AG04449 (cell line): ENCODE measurements at regions of chr20 and their contacts with region 1.

Region 1: DNA sequence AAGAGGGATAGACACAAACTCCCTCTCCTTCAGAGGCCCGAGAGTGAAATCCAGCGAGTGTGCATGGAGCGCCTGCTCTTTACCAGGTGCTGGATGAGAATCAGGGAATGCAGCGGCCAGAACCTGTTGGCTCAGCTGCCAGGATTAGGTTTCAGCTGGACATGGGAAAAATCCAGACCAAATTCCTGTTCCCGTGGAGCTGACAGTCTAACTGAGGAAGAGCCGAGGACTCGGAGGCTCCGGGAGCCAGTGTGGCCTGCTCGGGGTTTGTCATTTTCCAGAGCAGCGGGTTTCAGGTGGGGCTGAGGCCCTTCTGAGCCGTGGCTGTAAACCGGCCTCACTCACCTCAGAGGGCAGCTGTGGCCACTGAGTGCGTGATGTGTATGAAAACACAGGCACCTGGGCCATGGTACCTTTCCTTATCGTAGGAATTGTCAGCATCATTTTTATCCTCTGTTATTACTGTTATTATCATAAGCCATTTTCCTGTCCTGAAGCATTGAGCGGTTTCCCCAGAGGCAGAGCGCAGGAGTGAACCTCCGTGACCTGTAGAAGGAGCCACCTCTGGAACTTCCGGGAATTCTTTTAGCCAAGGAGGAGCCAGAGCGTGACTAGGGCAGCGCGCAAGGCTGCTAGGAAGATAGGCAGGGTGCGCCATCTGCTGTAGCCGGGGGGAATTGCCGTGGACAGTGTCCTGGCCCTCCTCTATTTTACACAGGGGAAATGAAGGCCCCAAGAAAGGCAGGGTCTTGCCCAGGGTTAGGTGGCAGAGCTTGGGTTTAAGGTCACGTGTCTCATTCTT is 27.3 kb downstream of the PKIG start:
- DNase-seq: peak; percentile 26
- H3K4me3 ChIP-seq: no peak overlapping the region
- CTCF ChIP-seq: peak; percentile 94

Region 2: DNA sequence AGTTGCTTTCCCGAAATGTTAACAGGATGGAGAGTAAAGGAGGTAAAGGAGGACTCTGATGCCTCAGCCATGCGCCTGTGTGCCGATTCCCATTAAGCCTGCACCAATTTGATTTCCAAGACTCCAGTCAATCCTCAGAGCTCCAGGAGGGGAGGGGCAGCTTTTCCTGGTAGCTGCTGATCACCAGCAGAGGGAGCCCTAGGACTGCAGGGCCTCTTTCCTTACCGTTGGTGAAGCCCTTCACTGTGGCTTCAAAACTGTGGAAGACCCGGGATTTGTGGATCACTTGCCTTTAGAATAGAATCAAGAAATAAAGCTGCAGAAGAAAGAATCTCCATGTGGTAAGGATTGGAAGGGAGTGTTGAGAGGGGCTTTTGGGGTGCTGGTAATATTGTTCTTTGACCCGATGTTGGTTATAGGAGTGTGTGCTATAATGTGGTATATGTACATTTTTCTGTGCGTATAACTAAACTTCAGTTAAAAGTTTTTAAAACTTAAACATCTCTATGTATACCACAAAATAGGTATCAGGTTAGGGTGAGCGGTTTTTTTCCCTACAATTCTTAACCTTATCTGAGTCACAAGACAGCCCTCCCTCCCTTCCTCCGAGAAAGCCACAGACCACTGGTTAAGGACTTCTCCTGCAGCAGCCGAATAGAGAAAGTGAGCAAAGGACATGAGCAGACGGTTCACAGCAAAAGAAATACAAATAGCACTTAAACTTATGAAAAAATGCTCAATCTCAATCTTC is 392.2 kb before region 1 on chr20:
- CTCF ChIA-PET with region 1: interaction called, 37 read pairs
- POLR2A ChIA-PET with region 1: no interaction called
- DNase-seq: no peak
- H3K4me3 ChIP-seq: no peak overlapping the region
- CTCF ChIP-seq: peak; percentile 85

Region 3: GRCh38 chr20:44460795-44461141 is 148.9 kb before region 1 on chr20:
- CTCF ChIA-PET with region 1: interaction called, 13 read pairs
- POLR2A ChIA-PET with region 1: no interaction called
- DNase-seq: no peak
- H3K4me3 ChIP-seq: no peak overlapping the region
- CTCF ChIP-seq: peak; percentile 9

Region 4: GRCh38 chr20:44475694-44476560 is 133.8 kb before region 1 on chr20 and contains the start of gene TTPAL:
- CTCF ChIA-PET with region 1: interaction called, 30 read pairs
- POLR2A ChIA-PET with region 1: no interaction called
- DNase-seq: no peak
- H3K4me3 ChIP-seq: peak within 1 kb of the TSS; percentile 96
- CTCF ChIP-seq: peak; percentile 50

Region 5: GRCh38 chr20:44521484-44522481 is 87.9 kb before region 1 on chr20 and contains the start of gene SERINC3:
- CTCF ChIA-PET with region 1: interaction called, 21 read pairs
- POLR2A ChIA-PET with region 1: no interaction called
- DNase-seq: peak; percentile 60
- H3K4me3 ChIP-seq: peak within 1 kb of the TSS; percentile 100
- CTCF ChIP-seq: no peak

Region 6: DNA sequence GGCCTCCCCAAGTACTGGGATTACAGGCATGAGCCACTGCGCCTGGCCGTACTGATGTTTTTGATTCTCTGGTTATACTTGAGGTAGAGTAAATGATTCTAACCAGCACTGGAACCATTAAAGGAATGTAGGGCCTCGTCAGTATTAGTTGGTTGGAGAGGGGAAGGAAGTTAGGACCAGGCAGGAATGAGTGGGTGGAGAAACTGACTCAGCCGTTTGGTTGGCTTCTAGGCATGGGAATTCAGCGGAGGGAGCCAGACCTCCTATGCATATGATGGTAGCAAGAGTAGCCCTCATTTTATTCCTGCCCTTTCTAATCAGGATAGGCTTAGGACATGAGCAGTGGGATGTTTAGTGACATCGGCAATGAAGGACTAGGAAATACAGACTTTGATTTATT is 68.9 kb before region 1 on chr20:
- CTCF ChIA-PET with region 1: interaction called, 10 read pairs
- POLR2A ChIA-PET with region 1: no interaction called
- DNase-seq: no peak
- H3K4me3 ChIP-seq: no peak overlapping the region
- CTCF ChIP-seq: no peak

Region 7: DNA sequence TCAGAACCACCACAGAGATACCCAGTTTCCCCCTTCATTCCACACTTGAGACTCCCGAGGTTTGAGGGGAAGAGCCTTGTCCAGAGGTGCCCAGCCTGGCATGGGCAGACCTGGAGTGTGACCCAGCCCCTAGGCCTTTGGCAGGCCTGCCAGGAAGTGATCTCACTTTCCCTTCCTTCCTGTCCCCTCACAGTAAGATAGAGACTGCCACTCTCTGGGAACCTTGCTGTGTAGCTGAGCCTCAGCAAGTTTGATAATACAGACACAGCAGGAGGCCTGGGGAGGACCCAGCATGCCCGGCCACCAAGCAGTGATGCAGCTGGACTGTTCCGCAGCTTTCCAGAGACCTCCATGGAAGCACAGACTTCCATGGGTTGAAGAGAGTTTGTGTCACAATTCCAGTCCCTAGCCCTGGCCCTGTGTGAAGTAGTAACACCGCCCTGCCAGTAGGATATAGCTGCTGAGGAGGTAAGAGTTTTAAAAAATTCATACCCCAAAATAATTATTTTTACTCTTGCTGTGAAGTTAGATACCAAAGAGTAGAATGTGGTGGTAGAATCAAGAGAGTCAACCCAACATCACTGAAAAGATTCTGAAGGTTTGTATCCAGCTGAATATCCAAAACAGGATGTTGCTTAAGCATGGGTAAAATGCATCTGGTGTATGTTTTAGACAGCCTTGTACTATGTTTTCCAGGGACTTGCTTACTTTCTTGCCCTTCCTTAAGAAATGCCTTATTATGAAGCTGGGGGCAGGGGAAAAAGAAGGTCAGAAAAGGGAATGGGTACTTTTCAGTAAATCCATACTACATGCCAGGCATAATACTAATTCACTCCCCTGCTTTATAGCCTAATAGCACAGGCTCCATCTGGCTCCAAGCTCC is 11.0 kb before region 1 on chr20:
- CTCF ChIA-PET with region 1: interaction called, 21 read pairs
- POLR2A ChIA-PET with region 1: no interaction called
- DNase-seq: no peak
- H3K4me3 ChIP-seq: no peak overlapping the region
- CTCF ChIP-seq: no peak